ENCODE measurements at regions of chr17 and their contacts with region 1.

Region 1: DNA sequence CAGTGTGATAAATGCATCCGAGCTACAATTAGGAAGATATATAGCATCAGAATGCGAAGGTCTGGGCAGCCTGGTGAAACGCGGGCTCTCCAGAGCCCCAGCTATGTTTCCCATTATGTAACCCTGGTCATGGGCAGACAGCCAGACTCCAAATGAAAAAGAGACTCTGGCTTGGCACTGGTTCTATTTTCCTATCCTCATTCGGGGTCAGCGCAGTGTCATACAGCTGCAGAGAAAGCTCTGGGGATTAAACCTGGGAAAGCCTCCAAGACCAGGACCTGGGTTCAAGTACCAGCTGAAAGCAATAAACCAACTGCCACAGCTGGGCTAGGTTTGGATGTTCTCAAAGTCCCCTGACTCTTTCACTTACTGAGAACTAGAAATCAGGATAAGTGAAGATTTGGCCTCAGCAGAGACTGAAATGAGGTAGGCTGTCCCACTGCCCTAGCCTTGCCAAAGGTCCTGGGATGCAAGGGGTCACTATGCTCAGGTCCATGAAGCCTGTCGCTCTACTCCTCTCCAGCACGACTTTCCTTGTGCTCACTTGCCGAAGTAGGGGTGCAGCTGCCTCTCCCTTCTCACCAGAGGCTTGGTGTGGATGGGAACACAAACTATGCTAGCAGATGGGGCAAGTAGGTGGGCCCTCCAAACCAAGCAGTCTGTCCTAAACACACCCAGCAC is 123.8 kb downstream of the SMG6 start:
- DNase-seq: peak; percentile 82 to 87
- ATAC-seq: peak; percentile 77
- H3K4me3 ChIP-seq: no peak overlapping the region
- H3K27ac ChIP-seq: peak overlapping the region; percentile 12 to 50
- H3K4me1 ChIP-seq: peaks cover 9 to 20% of the 10 kb centered on the region in 2 donors
- H3K27me3 ChIP-seq: no peaks in the 10 kb centered on the region

Region 2: DNA sequence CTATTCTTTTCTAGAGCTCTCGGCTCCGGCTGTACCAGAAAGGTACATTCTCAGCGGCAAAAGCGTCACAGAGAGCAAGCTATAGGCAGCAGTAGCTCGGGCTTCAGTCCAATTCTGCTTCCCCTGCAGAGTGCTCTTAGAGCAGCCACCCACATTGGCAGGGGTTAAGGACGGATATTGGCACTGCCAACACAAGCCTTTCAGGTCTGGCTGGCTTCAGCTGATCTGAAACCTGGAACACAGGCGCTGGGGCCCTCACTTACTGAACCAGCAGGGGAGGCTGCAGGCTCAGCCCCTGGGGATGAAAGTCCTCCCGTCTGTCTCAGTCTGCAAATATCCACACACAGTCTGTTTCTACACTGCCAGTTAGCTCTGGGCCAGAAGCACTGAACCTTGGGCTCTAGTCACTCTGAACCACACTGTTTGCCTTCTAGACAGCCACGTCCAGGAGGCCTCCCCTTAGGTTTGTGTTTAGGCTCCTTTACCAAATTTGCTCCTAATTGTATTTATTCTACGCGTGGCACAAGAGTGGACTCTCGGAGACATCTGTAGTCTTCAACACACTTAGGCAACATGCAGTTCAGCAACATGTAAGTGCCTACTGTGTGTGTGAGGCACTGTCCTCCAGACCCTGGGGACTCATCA is 84.7 kb before region 1 on chr17:
- intact Hi-C with region 1: no loop called
- DNase-seq: peak; percentile 80 to 84
- ATAC-seq: peak; percentile 69
- H3K4me3 ChIP-seq: no peak overlapping the region
- H3K27ac ChIP-seq: no peak overlapping the region
- H3K4me1 ChIP-seq: peaks cover 0 to 1% of the 10 kb centered on the region in 2 donors
- H3K27me3 ChIP-seq: no peaks in the 10 kb centered on the region

Region 3: GRCh38 chr17:2107506-2107905 is 72.2 kb before region 1 on chr17:
- intact Hi-C with region 1: loop called in 1 of 2 experiments (anchors 5 kb)
- DNase-seq: peak in 1 of 2 donors; percentile 73
- ATAC-seq: peak; percentile 80
- H3K4me3 ChIP-seq: no peak overlapping the region
- H3K27ac ChIP-seq: peak overlapping the region; percentile 7 to 85
- H3K4me1 ChIP-seq: peaks cover 6 to 9% of the 10 kb centered on the region in 2 donors
- H3K27me3 ChIP-seq: no peaks in the 10 kb centered on the region

Region 4: DNA sequence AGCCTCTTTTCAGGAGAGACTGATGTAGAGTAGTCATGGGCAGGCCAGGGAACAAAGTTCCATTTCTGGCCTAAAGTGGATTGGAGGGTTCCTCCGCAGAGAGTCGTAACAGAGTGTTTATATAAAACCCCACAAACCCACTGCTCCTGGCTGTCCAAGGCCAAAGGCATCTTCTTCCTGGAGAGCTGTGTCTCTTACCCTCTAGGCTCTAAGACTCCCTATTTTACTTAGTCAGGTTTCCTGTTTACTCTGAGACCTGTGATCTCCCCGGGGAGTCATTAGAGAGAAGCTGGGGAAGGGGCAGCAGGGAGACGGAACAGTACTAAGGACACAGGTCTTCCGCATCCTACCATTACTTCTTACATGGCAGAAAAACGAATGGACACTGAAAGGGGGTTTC is 55.4 kb before region 1 on chr17:
- intact Hi-C with region 1: no loop called
- DNase-seq: no peak
- ATAC-seq: no peak
- H3K4me3 ChIP-seq: no peak overlapping the region
- H3K27ac ChIP-seq: no peak overlapping the region
- H3K4me1 ChIP-seq: no peaks in the 10 kb centered on the region
- H3K27me3 ChIP-seq: no peaks in the 10 kb centered on the region

Region 5: DNA sequence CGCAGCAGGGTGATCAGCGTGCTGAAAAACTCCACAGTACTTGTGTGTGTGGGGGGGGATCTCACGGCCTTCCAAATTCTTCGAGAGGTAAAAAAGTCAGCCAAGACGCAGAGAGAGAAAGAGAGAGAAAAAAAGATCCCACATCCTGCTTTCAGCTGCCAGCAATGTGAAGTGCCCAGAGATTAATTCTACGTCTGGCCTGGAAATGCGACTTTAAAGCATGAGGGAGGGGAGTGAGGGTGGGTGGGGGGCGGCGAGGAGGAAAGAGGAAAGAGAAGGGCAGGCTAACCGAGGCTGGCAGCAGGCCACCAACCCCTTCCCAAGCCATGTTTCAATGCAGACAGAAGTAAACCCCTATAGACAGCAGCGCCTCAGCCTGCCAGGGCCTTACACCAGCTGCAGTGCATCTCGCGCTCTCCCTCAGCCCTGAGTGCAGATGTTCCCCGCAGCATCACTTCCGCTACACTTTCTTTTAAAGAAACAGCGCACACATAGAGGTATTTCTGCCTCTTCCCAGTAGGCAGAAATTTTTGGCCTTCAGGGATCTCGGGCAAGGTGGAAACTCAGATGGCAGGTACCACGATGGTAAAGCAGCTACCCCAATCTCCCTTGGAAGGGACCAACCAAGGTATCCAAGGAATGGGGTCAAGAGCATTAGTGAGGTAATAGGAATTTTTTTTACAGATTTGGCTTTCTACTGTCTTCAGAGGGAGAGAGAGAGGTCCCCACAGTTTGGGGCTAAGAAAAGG is 36.0 kb after region 1 on chr17:
- intact Hi-C with region 1: loop called (anchors 1 to 2 kb)
- DNase-seq: peak; percentile 84 to 88
- ATAC-seq: peak; percentile 81
- H3K4me3 ChIP-seq: peak overlapping the region; percentile 32 to 47
- H3K27ac ChIP-seq: peak overlapping the region; percentile 97 to 99
- H3K4me1 ChIP-seq: peaks cover 3 to 5% of the 10 kb centered on the region in 2 donors
- H3K27me3 ChIP-seq: no peaks in the 10 kb centered on the region

Measured in aorta (tissue), 5 donors.